Gastrocnemius medialis (tissue), 4 donors: ENCODE measurements at regions of chr3 and their contacts with region 1.

Region 1: DNA sequence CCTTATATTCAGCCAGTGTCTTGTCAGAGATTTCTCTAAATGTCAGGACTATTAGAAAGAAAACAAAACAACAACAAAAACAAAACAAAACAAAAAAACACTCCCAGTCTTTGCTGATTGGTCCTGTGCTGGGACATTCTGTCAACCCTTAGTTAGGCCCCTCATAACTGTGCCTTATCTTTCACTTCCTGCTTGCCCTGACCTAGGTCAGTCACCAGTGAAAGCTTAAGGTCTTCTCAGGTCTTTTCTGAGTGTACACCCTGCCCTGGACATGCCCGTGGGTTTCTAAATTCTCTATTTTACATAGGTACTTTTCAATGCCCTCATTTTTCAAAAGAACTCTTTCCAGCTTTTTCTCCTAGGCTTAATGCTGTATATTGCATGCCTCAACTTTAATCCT is 454.1 kb downstream of the GRM7 start:
- DNase-seq: no peak
- ATAC-seq: no peak
- H3K4me3 ChIP-seq: no peak overlapping the region
- H3K27ac ChIP-seq: no peak overlapping the region
- H3K4me1 ChIP-seq: no peaks in the 10 kb centered on the region
- H3K27me3 ChIP-seq: no peaks in the 10 kb centered on the region
- CTCF ChIP-seq: no peak
- POLR2A ChIP-seq: no peak

Region 2: DNA sequence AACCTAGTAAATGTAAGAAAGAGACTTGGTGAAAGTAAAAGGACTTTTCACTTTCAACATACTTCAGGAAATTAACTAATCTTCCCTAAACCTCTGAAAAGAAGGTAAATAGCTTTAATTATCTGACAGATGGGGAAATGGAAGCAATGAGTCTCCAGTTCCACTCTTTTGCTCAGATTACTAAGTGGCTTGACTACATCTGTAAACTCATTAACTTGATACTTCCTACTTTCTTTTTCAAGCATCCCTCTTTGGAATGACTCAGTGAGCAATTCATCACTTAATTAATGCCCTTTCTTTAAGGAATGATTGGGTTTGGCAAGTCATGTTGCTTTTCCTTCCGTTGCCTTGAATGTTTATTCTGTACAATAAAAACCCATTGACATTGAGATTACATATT is 219.9 kb before region 1 on chr3:
- in situ Hi-C with region 1: no loop called
- intact Hi-C with region 1: no loop called
- DNase-seq: no peak
- ATAC-seq: no peak
- H3K4me3 ChIP-seq: no peak overlapping the region
- H3K27ac ChIP-seq: no peak overlapping the region
- H3K4me1 ChIP-seq: no peaks in the 10 kb centered on the region
- H3K27me3 ChIP-seq: no peaks in the 10 kb centered on the region
- CTCF ChIP-seq: no peak
- POLR2A ChIP-seq: no peak

Region 3: DNA sequence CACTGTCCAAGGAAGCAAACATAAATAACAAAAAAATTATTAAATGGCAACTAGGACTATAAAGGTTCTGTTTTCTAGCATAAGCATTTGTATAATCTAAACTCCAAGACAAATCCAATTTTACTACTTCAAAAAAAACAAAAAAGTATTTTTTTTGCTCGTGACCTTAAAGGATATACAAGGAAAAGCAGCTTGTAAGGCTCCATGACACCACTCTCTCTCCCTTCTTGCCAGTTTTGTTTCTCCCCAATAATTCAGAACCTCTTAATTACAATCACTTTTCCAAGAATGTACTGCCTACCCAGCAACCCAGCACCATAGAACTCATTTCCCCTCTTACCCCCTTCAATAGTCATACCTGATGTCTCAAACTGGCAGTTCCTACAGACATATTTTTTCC is 42.1 kb after region 1 on chr3:
- in situ Hi-C with region 1: no loop called
- intact Hi-C with region 1: loop called (anchors 2 kb)
- DNase-seq: no peak
- ATAC-seq: no peak
- H3K4me3 ChIP-seq: no peak overlapping the region
- H3K27ac ChIP-seq: no peak overlapping the region
- H3K4me1 ChIP-seq: no peaks in the 10 kb centered on the region
- H3K27me3 ChIP-seq: no peaks in the 10 kb centered on the region
- CTCF ChIP-seq: no peak
- POLR2A ChIP-seq: no peak